Activated CD4-positive, alpha-beta memory T cell treated with anti-CD3 and anti-CD28 coated beads for 36 hours (primary cell): ENCODE measurements at regions of chr10 and their contacts with region 1.

Region 1: GRCh38 chr10:101018600-101019439 is 12.1 kb downstream of the PDZD7 start:
- DNase-seq: peak; percentile 89
- H3K4me3 Mint-ChIP-seq: no peak overlapping the region
- H3K27ac Mint-ChIP-seq: no peak overlapping the region
- H3K4me1 Mint-ChIP-seq: peaks cover 15% of the 10 kb centered on the region
- H3K27me3 Mint-ChIP-seq: peaks cover 38% of the 10 kb centered on the region

Region 2: DNA sequence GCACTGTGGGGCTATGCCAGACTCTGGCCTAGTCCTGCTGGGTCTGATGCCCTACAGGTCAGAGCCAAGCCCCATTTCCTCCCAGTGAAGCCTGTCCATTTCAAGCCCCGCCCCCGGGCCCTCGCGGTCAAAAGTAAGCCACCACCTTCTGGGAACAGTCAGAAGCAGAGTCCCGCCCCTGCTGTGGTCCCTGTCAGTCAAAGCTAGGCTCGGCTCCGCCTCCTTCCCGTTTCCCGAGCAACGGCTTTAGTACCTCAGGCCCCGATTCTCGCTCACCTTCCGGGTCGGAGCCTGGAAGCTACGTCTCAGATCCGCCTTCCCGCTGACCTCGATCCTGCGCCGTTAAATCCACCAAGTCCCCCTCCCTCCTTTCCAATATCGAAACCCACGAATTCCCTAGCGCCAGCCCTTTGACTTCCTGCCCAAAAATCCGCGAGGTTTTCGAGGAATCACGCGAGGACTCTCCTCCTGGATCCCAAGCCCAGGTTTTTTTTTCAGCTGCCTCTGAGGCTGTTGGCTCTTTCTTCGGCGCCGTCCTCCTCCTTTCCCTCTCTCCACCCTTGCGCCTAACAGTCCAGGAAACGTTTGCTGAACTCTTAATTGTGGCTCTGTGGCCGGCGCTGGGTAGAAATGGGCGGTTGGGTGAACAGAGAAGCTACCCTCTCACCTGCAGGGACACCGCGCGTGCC is 24.0 kb after region 1 on chr10:
- CTCF ChIA-PET with region 1: interaction called, 10 read pairs
- POLR2A ChIA-PET with region 1: interaction called, 3 read pairs
- intact Hi-C with region 1: loop called (anchors 1 kb)
- DNase-seq: peak; percentile 96
- H3K4me3 Mint-ChIP-seq: peak overlapping the region; percentile 96
- H3K27ac Mint-ChIP-seq: peak overlapping the region; percentile 89
- H3K4me1 Mint-ChIP-seq: peaks cover 21% of the 10 kb centered on the region
- H3K27me3 Mint-ChIP-seq: peaks cover 18% of the 10 kb centered on the region

Region 3: GRCh38 chr10:101050208-101051069 is 31.6 kb after region 1 on chr10:
- CTCF ChIA-PET with region 1: interaction called, 30 read pairs
- POLR2A ChIA-PET with region 1: interaction called, 4 read pairs
- intact Hi-C with region 1: loop called (anchors 1 kb)
- DNase-seq: peak; percentile 84
- H3K4me3 Mint-ChIP-seq: no peak overlapping the region
- H3K27ac Mint-ChIP-seq: no peak overlapping the region
- H3K4me1 Mint-ChIP-seq: peaks cover 15% of the 10 kb centered on the region
- H3K27me3 Mint-ChIP-seq: peaks cover 47% of the 10 kb centered on the region

Region 4: DNA sequence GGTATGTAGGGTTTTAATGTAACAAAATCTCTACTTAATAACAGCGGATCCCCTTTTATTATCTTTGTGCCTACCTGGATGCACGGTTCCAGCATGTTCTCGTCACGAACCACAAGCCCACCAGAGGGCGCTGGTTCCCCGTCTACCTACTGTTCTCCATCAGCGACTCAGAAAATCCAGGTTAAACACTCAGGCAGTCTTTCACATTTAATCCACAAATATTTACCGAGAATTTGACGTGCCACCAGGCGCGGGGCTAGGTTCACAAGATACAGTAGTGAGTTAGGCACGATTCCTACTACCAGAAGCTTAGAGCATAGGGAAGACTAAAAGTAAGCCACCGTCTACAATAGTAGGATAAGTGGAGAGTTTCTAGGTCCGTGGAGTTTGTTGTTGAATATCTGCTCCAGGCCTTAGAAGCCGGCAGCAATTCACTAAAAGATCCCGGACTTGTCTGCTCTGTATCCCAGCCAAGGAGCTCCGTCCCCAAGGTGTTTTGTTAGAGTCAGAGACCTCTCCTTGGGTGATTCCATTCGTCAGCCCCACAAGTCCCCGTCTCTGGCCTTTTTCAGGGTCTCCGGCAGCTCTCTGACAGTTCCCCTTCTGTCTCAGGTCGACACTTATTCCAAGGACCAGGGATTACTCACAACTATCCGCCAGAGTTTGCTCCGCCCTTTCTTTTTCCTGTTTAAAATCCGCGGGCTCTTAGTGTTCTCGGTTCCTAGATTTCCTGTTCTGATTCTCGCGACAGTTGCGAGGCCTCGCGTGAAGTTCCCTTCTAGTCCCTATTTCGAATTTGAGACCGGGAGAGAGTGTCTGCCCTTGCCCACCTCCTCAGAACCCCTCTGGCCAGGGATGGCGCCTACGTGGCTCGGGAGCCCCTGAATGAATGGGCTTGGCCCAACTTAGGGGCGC is 41.5 kb after region 1 on chr10:
- CTCF ChIA-PET with region 1: interaction called, 41 read pairs
- POLR2A ChIA-PET with region 1: no interaction called
- intact Hi-C with region 1: loop called (anchors 2 kb)
- DNase-seq: peak; percentile 92
- H3K4me3 Mint-ChIP-seq: peak overlapping the region; percentile 95
- H3K27ac Mint-ChIP-seq: peak overlapping the region; percentile 85
- H3K4me1 Mint-ChIP-seq: peaks cover 17% of the 10 kb centered on the region
- H3K27me3 Mint-ChIP-seq: peaks cover 21% of the 10 kb centered on the region

Region 5: DNA sequence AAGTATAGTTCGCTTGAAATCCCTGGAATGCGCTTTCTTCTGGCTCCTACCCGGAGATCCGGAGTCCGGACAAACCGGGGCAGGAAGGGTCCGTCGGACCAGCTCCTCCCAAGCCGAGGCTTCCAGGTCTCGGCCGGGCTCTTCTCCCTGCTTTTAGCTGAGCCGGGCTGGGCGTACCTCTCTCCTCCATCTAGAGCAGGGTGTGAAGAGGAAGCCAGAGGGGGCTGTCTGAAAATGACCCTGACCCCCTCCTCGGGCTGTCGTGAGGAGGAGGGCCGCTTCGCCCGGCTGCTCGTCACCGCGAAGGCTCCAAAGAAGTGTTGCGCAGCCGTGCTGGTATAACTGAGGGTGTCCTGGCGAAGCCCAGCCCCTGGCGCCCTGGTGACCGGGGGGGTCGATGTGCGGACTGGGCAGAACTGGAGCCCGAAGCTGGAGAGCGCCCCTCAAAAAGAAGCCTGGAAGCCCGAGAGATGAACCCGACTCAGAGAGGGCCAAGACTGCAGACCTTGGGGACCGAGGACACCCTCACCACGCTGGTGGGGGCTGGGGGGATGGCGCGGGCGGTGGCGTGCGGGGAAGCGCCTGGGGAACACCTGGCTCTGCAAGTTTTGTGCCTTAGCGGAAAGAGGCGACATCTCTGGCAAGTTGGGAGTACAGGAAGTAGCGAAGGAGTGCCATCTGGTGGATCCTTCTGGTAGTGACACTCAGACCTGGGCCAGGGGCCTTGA is 48.7 kb after region 1 on chr10:
- CTCF ChIA-PET with region 1: interaction called, 41 read pairs
- POLR2A ChIA-PET with region 1: no interaction called
- intact Hi-C with region 1: no loop called
- DNase-seq: peak; percentile 87
- H3K4me3 Mint-ChIP-seq: peak overlapping the region; percentile 73
- H3K27ac Mint-ChIP-seq: no peak overlapping the region
- H3K4me1 Mint-ChIP-seq: peaks cover 12% of the 10 kb centered on the region
- H3K27me3 Mint-ChIP-seq: peaks cover 43% of the 10 kb centered on the region

Region 6: GRCh38 chr10:101415884-101416283 is 397.1 kb after region 1 on chr10:
- CTCF ChIA-PET with region 1: no interaction called
- POLR2A ChIA-PET with region 1: no interaction called
- intact Hi-C with region 1: no loop called
- DNase-seq: no peak
- H3K4me3 Mint-ChIP-seq: no peak overlapping the region
- H3K27ac Mint-ChIP-seq: no peak overlapping the region
- H3K4me1 Mint-ChIP-seq: peaks cover 12% of the 10 kb centered on the region
- H3K27me3 Mint-ChIP-seq: no peaks in the 10 kb centered on the region